ENCODE measurements at regions of chr11 and their contacts with region 1.

Region 1: GRCh38 chr11:110092515-110093404 is at the start of gene ZC3H12C:
- DNase-seq: peak; percentile 83
- H3K4me3 ChIP-seq: peak within 1 kb of the TSS; percentile 59 to 72
- H3K27ac ChIP-seq: peak within 1 kb of the TSS; percentile 92
- H3K4me1 ChIP-seq: no peaks in the 10 kb centered on the region
- H3K27me3 ChIP-seq: no peaks in the 10 kb centered on the region
- CTCF ChIP-seq: peak in 3 of 4 experiments; percentile 35 to 73 (median 56)
- POLR2A ChIP-seq: peak; percentile 17
- total RNA-seq, gene ZC3H12C: 6.5 to 11.9 TPM

Region 2: GRCh38 chr11:109954534-109954933 is 138.2 kb before region 1 on chr11:
- intact Hi-C with region 1: loop called (anchors 5 kb)
- DNase-seq: no peak
- H3K4me3 ChIP-seq: no peak overlapping the region
- H3K27ac ChIP-seq: no peak overlapping the region
- H3K4me1 ChIP-seq: no peaks in the 10 kb centered on the region
- H3K27me3 ChIP-seq: no peaks in the 10 kb centered on the region
- CTCF ChIP-seq: no peak
- POLR2A ChIP-seq: no peak

Region 3: GRCh38 chr11:110069158-110069737 is 23.5 kb before region 1 on chr11:
- intact Hi-C with region 1: no loop called
- DNase-seq: no peak
- H3K4me3 ChIP-seq: no peak overlapping the region
- H3K27ac ChIP-seq: no peak overlapping the region
- H3K4me1 ChIP-seq: no peaks in the 10 kb centered on the region
- H3K27me3 ChIP-seq: no peaks in the 10 kb centered on the region
- CTCF ChIP-seq: no peak
- POLR2A ChIP-seq: no peak

Region 4: DNA sequence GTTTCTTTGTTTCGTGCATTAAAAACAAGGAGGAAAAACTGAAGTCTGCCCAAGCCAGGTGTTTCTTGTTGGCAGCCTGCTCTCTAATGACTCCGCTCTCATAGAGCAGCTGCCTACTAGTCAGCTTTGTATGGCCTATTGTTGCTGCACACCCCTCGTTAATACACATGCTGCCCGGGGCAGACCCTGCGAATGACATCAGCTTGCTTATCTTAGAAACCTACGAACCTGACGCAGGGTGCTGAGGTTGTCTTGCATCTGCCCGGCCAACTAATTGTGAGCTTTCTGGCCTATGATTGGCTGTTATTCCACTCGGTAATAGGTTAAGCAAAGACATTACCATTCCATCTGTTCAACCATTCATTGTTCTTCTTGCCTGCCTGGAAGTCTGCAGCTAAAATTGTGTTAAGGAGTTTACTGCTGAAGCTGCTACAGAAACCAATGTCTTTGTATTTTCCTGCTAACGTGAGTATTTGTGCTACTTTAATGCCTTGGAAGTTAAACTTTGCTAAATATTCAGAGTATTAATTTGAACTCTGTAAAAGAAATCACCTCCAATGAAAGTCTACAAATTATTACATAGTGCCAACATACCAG is 38.0 kb after region 1 on chr11:
- intact Hi-C with region 1: no loop called
- DNase-seq: no peak
- H3K4me3 ChIP-seq: no peak overlapping the region
- H3K27ac ChIP-seq: no peak overlapping the region
- H3K4me1 ChIP-seq: no peaks in the 10 kb centered on the region
- H3K27me3 ChIP-seq: no peaks in the 10 kb centered on the region
- CTCF ChIP-seq: no peak
- POLR2A ChIP-seq: no peak

Region 5: DNA sequence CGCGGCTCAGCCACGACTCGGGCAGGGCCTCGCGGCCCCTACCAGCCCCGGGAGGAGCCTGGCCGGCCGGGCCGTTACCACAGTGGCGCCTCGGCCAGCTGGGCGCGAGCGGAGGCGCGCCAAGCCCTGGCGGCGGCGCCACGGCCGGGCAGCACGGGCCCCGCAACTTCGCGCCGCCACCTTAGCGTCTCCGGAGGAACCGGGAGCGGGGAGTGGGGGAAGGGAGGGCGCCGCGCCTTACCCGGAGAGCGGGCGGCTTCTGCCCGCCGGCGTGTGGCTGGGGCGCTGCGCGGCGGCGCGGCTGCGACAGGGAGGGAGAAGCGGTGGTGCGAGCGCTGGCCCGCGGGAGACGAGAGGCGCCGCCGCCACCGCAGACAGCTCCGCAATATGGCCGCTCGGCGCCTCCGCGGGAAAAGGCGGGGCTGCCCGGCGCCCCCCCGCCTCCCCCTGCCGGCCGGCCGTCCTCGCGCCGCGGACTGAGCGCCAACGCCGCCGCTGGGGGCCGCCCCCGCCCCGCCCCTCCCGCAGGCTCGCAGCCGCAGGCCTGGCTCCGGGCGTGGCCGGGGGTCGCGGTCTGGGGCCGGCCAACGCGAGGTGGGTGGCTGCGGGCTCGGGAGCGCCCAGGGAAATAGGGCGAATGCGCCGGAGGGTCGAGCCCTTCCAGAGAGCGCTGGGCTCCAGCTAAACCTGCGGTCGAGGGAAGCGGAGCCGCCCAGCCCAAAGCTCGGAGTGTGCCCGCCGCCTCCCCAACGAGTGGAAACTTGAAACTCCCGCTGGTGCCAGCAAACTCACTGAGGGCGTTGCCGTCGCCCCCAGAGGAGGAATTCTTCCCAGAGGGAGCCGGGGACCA is 203.7 kb after region 1 on chr11 and contains the start of gene RDX:
- intact Hi-C with region 1: loop called (anchors 5 kb)
- DNase-seq: peak; percentile 63
- H3K4me3 ChIP-seq: peak within 1 kb of the TSS; percentile 87 to 93
- H3K27ac ChIP-seq: peak within 1 kb of the TSS; percentile 96 to 99
- H3K4me1 ChIP-seq: no peaks in the 10 kb centered on the region
- H3K27me3 ChIP-seq: no peaks in the 10 kb centered on the region
- CTCF ChIP-seq: peak in 3 of 4 experiments; percentile 16 to 29 (median 20)
- POLR2A ChIP-seq: no peak
- total RNA-seq, gene RDX: 45.4 to 136 TPM

Region 6: DNA sequence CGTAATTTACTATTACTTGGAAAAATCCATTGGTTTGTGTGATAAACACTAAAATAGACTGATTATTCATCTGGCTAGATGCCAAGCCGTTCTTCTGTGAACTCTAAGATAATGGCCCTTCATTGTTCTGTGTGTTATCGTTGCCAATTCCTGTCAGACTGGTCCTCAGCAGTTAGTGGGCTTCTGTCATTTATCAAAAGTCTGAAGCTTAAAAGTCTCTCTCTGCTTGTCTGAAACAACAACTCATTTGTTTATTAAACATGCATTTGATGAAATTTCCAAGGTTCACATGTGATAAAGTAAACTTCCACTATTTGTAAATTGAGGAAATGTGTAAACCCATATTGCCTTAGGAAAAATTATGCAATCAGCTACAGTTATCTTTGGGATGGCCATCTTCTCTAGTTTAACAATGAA is 224.8 kb after region 1 on chr11:
- intact Hi-C with region 1: no loop called
- DNase-seq: no peak
- H3K4me3 ChIP-seq: no peak overlapping the region
- H3K27ac ChIP-seq: no peak overlapping the region
- H3K4me1 ChIP-seq: no peaks in the 10 kb centered on the region
- H3K27me3 ChIP-seq: no peaks in the 10 kb centered on the region
- CTCF ChIP-seq: no peak
- POLR2A ChIP-seq: no peak